ENCODE measurements at regions of chr2 and their contacts with region 1.

Region 1: DNA sequence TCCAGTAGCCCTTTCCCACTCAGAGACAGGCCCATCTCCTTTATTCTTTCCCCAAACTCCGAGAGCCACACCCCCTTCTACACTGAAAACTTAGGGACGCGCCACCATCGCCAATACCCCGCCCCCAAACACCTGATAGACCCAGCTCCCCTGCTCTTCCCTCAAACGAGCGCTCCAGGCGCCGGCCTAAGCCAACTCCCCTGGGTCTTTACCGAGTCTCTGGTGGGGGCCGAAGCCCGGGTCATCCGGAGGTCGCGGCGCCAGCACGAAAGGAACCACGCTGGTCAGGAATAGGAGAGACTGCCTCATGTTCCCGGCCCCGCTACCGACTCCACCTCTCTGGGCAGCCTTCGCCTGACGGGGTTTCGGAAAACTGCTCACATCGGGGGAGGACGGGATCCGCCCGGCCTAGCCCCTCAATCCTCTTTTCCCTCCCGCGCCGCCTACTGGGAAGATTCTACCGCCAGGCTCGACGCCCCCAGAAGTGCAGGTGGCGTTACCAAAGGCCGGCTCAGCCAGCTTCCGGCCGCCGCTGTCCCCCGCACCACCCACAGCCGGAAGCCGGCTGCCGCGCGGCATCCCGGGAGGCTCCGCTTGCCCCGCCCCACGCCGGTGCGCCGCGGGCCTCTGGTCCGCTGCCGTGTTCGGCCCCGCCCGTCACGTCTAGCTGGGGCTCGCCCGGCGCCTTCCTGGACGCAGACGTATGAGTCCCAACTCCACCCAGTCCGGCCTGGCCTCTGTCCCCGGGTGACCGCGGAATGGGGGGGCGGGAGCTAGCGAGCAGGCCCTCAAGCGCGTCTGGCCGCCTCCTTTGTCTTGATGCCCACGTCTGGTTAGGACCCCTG is at the start of gene ADAM17:
- DNase-seq: peak; percentile 95
- H3K4me3 Mint-ChIP-seq: peak within 1 kb of the TSS; percentile 92
- H3K27ac Mint-ChIP-seq: peak within 1 kb of the TSS; percentile 94
- H3K4me1 Mint-ChIP-seq: peaks cover 39% of the 10 kb centered on the region
- H3K27me3 Mint-ChIP-seq: no peaks in the 10 kb centered on the region
- CTCF ChIP-seq: peak; percentile 43
- total RNA-seq, gene ADAM17: 44.3 and 47.3 TPM in 2 replicates

Region 2: GRCh38 chr2:9423100-9423921 is 132.2 kb before region 1 on chr2 and contains the starts of genes CPSF3 and ITGB1BP1:
- CTCF ChIA-PET with region 1: no interaction called
- POLR2A ChIA-PET with region 1: interaction called, 23 read pairs
- intact Hi-C with region 1: no loop called
- DNase-seq: peak; percentile 98
- H3K4me3 Mint-ChIP-seq: no peak within 1 kb of the TSS
- H3K27ac Mint-ChIP-seq: peak within 1 kb of the TSS; percentile 94
- H3K4me1 Mint-ChIP-seq: peaks cover 20% of the 10 kb centered on the region
- H3K27me3 Mint-ChIP-seq: no peaks in the 10 kb centered on the region
- CTCF ChIP-seq: no peak
- total RNA-seq, gene CPSF3: 51.0 and 51.6 TPM in 2 replicates
- total RNA-seq, gene ITGB1BP1: 124 and 125 TPM in 2 replicates

Region 3: GRCh38 chr2:9545502-9545901 is 10.0 kb before region 1 on chr2:
- CTCF ChIA-PET with region 1: interaction called, 4 read pairs
- POLR2A ChIA-PET with region 1: interaction called, 41 read pairs
- intact Hi-C with region 1: no loop called
- DNase-seq: no peak
- H3K4me3 Mint-ChIP-seq: no peak overlapping the region
- H3K27ac Mint-ChIP-seq: no peak overlapping the region
- H3K4me1 Mint-ChIP-seq: peaks cover 21% of the 10 kb centered on the region
- H3K27me3 Mint-ChIP-seq: no peaks in the 10 kb centered on the region
- CTCF ChIP-seq: no peak

Region 4: GRCh38 chr2:9613291-9613690 is 57.8 kb after region 1 on chr2:
- CTCF ChIA-PET with region 1: no interaction called
- POLR2A ChIA-PET with region 1: interaction called, 17 read pairs
- intact Hi-C with region 1: no loop called
- DNase-seq: peak; percentile 81
- H3K4me3 Mint-ChIP-seq: no peak overlapping the region
- H3K27ac Mint-ChIP-seq: peak overlapping the region; percentile 40
- H3K4me1 Mint-ChIP-seq: peaks cover 41% of the 10 kb centered on the region
- H3K27me3 Mint-ChIP-seq: no peaks in the 10 kb centered on the region
- CTCF ChIP-seq: no peak

Region 5: DNA sequence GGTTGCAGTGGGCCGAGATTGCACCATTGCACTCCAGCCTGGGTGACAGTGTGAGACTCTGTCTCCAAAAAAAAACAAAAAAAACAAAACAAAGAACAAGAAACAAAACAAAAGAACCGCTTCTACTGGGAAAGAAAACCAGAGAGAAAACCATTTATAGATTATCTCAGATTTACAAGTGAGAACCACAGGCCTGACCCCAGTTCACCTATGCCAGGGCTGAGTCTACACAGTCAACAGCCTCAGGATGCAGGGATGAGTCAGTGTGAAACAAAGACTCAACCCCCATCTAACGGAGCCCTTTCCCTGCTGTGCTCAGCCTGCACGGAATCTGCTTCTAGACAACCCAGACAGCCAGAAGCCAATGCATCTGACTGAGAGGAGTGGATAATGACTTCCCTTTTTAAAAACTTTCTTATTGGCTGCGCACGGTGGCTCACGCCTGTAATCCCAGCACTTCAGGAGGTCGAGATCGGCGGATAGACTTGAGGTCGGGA is 100.8 kb after region 1 on chr2:
- CTCF ChIA-PET with region 1: no interaction called
- POLR2A ChIA-PET with region 1: interaction called, 11 read pairs
- intact Hi-C with region 1: no loop called
- DNase-seq: peak; percentile 92
- H3K4me3 Mint-ChIP-seq: no peak overlapping the region
- H3K27ac Mint-ChIP-seq: peak overlapping the region; percentile 25
- H3K4me1 Mint-ChIP-seq: peaks cover 43% of the 10 kb centered on the region
- H3K27me3 Mint-ChIP-seq: peaks cover 13% of the 10 kb centered on the region
- CTCF ChIP-seq: no peak

Region 6: GRCh38 chr2:9770308-9771100 is 215.0 kb after region 1 on chr2:
- CTCF ChIA-PET with region 1: interaction called, 10 read pairs
- POLR2A ChIA-PET with region 1: interaction called, 8 read pairs
- intact Hi-C with region 1: loop called (anchors 5 kb)
- DNase-seq: peak; percentile 89
- H3K4me3 Mint-ChIP-seq: peak overlapping the region; percentile 39
- H3K27ac Mint-ChIP-seq: no peak overlapping the region
- H3K4me1 Mint-ChIP-seq: peaks cover 26% of the 10 kb centered on the region
- H3K27me3 Mint-ChIP-seq: no peaks in the 10 kb centered on the region
- CTCF ChIP-seq: peak; percentile 69

Region 7: DNA sequence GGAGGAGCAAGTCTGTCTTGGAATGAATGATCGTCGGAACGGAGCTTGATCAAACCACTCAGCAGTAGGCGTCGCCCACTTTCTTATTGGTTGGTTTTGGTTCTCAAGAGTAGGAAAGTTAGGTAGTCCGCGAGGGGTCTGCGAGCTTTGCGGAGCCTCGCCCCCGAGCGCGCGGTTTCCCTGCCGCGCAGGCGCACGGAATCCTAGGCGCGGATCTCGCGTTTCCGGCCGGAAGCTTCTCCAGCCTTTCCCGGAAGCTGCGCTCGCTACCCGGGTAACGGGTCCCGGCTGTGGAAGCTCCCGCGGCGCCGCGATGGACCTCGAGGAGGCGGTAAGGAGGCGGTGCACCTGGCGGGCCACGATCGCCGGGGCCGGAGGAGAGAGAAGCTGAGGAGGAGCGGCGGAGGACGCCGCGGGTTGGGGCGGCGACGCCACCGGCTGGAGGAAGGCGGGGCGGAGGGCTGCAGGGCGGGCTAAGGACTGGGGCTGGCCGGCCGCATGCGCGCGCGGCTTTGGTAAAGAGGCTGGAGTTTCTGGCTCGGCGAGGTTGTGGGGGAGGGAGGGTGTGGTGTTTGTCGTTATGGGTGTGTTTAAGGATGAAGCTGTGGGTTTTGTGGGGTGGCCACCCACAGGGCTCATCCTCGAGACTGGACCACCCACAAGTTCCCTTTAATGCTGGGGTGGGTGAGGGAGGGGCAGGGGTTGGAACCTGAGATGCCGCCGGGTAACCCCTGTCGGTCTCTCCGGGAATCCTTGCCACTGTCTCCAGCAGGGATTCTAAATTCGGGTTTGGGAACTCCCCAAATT is 287.9 kb after region 1 on chr2 and contains the start of gene TAF1B:
- CTCF ChIA-PET with region 1: no interaction called
- POLR2A ChIA-PET with region 1: interaction called, 6 read pairs
- intact Hi-C with region 1: loop called (anchors 5 kb)
- DNase-seq: peak; percentile 94
- H3K4me3 Mint-ChIP-seq: peak within 1 kb of the TSS; percentile 82
- H3K27ac Mint-ChIP-seq: peak within 1 kb of the TSS; percentile 92
- H3K4me1 Mint-ChIP-seq: peaks cover 40% of the 10 kb centered on the region
- H3K27me3 Mint-ChIP-seq: no peaks in the 10 kb centered on the region
- CTCF ChIP-seq: no peak
- total RNA-seq, gene TAF1B: 19.7 and 25.5 TPM in 2 replicates

Measured in MCF 10A (cell line).